ENCODE measurements at regions of chr7 and their contacts with region 1.

Region 1: DNA sequence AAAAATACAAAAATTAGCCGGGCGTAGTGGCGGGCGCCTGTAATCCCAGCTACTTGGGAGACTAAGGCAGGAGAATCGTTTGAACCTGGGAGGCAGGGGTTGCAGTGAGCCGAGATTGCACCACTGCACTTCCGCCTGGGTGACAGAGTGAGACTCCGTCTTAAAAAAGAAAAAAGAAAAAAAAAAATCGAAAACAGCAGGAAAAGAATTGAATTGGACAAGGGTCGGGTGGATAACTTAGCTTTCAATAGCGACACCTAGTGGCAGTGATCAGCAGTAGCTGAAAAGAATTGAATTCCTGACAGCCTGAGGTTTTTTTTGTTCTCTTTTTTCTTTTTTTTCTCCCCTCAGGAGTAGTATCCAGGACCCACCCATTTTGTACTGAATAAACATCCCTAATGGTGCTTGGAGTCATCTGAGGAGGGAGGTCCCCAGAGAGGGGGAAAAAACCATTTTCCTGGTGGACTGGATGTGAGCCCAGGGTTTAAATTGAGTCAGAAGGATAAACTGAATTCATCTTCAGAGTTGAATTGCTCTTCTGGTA is 55.1 kb downstream of the CYCS start:
- DNase-seq: no peak
- ATAC-seq: peak; percentile 79
- H3K4me3 ChIP-seq: peak overlapping the region; percentile 22 to 52
- H3K27ac ChIP-seq: no peak overlapping the region
- H3K4me1 ChIP-seq: no peaks in the 10 kb centered on the region
- H3K27me3 ChIP-seq: no peaks in the 10 kb centered on the region
- CTCF ChIP-seq: peak; percentile 91

Region 2: GRCh38 chr7:24819916-24820689 is 249.9 kb before region 1 on chr7:
- CTCF ChIA-PET with region 1: interaction called, 13 read pairs
- POLR2A ChIA-PET with region 1: no interaction called
- in situ Hi-C with region 1: no loop called
- intact Hi-C with region 1: loop called (anchors 1 kb)
- DNase-seq: peak; percentile 82
- ATAC-seq: peak; percentile 91
- H3K4me3 ChIP-seq: no peak overlapping the region
- H3K27ac ChIP-seq: no peak overlapping the region
- H3K4me1 ChIP-seq: peaks cover 11% of the 10 kb centered on the region; the same call in 1 of the 2 replicates
- H3K27me3 ChIP-seq: no peaks in the 10 kb centered on the region
- CTCF ChIP-seq: peak; percentile 95

Region 3: DNA sequence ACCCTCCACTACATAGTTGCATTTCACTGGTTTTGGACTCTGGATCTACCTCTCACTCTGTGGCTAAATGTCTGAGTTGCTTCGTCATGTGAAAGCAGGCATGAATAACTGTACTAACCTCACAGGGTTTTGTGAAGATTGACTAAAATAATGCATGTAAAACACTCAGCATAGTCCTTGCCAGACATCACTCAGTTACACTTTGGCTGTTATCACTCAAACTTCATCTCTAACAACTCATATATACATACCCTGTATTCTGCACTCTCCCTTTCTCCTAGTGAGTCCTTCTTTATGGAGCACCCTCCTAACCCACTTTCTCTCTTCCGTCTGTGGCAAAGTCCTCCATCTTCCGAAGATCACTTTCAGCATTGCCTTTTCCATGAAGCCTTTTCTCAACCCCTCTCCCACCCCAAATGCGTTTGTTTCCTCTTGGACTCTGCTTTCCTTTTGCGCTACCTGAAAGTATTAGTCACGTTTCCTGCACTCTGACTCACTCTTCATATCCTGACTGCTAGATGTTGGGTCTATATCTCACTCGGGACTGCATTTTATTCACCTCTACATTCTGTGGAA is 162.6 kb before region 1 on chr7:
- CTCF ChIA-PET with region 1: interaction called, 4 read pairs
- POLR2A ChIA-PET with region 1: interaction called, 13 read pairs
- in situ Hi-C with region 1: no loop called
- intact Hi-C with region 1: no loop called
- DNase-seq: peak; percentile 63
- ATAC-seq: peak; percentile 83
- H3K4me3 ChIP-seq: peak overlapping the region in 1 of 2 experiments; percentile 3; a peak in 1 of 4 replicates
- H3K27ac ChIP-seq: no peak overlapping the region
- H3K4me1 ChIP-seq: peaks cover 8% of the 10 kb centered on the region; the same call in 1 of the 2 replicates
- H3K27me3 ChIP-seq: no peaks in the 10 kb centered on the region
- CTCF ChIP-seq: no peak

Region 4: GRCh38 chr7:24979863-24980533 is 90.0 kb before region 1 on chr7 and contains the start of gene OSBPL3:
- CTCF ChIA-PET with region 1: interaction called, 9 read pairs
- POLR2A ChIA-PET with region 1: no interaction called
- in situ Hi-C with region 1: no loop called
- intact Hi-C with region 1: loop called (anchors 5 kb)
- DNase-seq: peak; percentile 57
- ATAC-seq: peak; percentile 91
- H3K4me3 ChIP-seq: peak within 1 kb of the TSS; percentile 74 to 79
- H3K27ac ChIP-seq: peak within 1 kb of the TSS; percentile 75
- H3K4me1 ChIP-seq: peaks cover 6% of the 10 kb centered on the region; the same call in 1 of the 2 replicates
- H3K27me3 ChIP-seq: peaks cover 12% of the 10 kb centered on the region
- CTCF ChIP-seq: no peak
- total RNA-seq, gene OSBPL3: 9.2 TPM

Region 5: DNA sequence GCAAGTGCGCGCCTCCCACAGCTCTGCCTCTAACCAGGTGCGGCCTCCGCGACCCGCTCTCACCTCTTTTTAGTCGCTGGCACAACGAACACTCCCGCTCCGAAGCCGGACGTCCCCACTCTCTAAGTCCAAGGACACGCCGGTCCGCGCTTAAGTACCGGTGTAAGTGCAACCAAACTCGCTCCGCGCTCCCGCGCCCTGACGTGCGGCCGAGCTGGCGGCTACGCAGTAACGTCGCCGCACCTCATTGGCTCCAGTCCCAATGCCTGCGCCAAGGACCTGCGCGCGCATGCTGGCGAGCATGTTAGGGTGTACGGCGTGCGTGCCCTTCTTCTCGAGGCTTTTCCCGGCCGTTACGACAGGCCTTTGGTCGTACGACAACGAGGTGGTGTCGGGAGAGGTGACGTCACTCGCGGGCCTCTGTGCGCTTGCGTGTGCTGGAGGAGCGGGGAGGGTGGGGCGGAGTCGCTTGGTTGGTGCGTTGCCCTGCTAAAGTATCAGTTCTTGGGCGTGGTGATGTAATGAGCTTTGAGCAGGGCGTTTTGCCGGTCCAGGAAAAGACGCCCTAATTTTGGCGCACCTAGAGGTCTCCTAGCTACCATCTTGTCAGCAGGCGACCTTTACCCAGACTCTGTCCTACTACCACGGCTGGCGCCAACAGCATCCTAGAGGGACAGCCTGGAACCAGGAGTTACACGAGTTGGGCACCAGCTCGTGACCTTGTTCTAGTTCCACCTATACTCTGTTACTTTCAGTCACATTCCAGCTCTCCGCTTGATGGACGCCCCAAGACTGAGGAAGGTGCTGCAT is 55.4 kb after region 1 on chr7 and contains the start of gene CYCS:
- CTCF ChIA-PET with region 1: interaction called, 13 read pairs
- POLR2A ChIA-PET with region 1: no interaction called
- in situ Hi-C with region 1: no loop called
- intact Hi-C with region 1: no loop called
- DNase-seq: peak; percentile 100
- ATAC-seq: peak; percentile 98
- H3K4me3 ChIP-seq: peak within 1 kb of the TSS; percentile 75 to 99
- H3K27ac ChIP-seq: peak within 1 kb of the TSS; percentile 99
- H3K4me1 ChIP-seq: 0 out of 2 replicates have a peak, but pooled peaks cover 3% of the 10 kb centered on the region
- H3K27me3 ChIP-seq: peaks cover 3% of the 10 kb centered on the region; the same call in 1 of the 2 replicates
- CTCF ChIP-seq: no peak
- total RNA-seq, gene CYCS: 245 TPM

Region 6: DNA sequence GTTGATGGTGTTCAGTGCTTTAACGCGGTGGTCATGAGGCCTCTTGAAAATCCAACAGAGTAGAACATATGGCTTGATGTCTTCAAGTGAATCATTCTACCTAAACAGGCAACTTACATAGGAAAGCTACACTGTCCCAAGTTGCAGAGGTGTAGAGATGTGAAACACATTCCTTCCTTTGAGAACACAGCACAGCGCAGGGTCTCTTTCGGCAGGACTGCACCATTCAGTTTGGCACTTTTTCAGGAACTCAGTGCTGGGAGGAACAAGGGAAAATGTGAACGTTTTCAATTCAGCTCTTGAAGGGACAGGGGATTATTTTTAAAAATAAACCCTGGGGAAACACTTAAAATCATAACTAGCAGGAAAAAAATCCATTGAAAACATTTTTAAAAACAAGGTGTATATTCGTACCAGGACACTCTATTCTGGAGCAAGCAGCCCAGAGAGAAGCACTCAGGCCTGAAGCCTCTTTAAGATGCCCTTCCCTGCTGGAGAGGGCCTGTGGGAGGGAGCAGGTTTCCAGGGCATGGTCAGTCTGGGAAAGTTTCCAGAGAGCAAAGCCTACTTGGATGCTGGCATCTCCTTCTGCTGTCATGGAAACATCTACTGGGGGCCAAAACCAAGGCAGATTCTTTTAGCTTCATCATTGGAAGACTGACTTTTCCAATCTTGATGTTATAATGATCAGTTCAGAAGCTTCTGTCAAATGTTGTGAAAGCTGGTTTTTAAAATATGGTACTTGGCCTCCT is 218.8 kb after region 1 on chr7:
- CTCF ChIA-PET with region 1: no interaction called
- POLR2A ChIA-PET with region 1: no interaction called
- in situ Hi-C with region 1: no loop called
- intact Hi-C with region 1: no loop called
- DNase-seq: no peak
- ATAC-seq: no peak
- H3K4me3 ChIP-seq: no peak overlapping the region
- H3K27ac ChIP-seq: no peak overlapping the region
- H3K4me1 ChIP-seq: no peaks in the 10 kb centered on the region
- H3K27me3 ChIP-seq: no peaks in the 10 kb centered on the region
- CTCF ChIP-seq: no peak

Region 7: DNA sequence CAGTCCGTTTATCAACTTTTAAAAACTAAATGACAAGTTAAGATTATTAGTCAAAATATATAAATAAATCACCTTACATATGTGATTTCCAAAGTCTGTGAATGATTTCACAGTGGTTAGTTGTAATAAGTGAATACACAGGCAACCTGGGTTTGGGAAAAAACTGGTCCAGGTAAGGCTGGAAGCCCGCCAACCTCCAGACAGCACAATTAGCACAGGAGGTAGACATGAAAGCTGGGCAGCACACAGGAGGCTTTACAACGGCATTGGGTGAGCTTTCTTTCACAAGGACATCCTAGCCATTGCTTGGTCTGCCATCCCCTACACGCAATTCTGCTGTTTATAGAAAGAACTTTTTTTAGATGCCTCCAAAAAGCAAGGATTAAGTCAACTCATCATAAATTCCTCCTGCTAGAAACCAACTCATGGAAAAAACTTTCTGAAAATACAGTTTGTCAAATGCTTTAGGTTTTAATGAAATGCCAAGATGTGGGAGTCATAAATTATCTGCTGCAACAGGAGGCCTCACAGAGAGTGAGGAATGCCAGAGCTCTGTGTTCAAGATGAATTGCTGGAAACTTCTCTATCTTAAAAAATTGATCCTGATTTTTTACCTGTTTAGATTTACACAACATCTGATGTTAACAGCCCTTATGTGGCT is 735.2 kb after region 1 on chr7:
- CTCF ChIA-PET with region 1: no interaction called
- POLR2A ChIA-PET with region 1: no interaction called
- in situ Hi-C with region 1: no loop called
- intact Hi-C with region 1: no loop called
- DNase-seq: no peak
- ATAC-seq: no peak
- H3K4me3 ChIP-seq: no peak overlapping the region
- H3K27ac ChIP-seq: no peak overlapping the region
- H3K4me1 ChIP-seq: no peaks in the 10 kb centered on the region
- H3K27me3 ChIP-seq: peaks cover 8% of the 10 kb centered on the region; the same call in 1 of the 2 replicates
- CTCF ChIP-seq: no peak

Measured in Panc1 (cell line).